ENCODE measurements at regions of chr7 and their contacts with region 1.

Region 1: GRCh38 chr7:116258734-116259133 is 48.4 kb downstream of the TES start:
- DNase-seq: peak; percentile 76
- H3K4me3 Mint-ChIP-seq: no peak overlapping the region
- H3K27ac Mint-ChIP-seq: no peak overlapping the region
- H3K4me1 Mint-ChIP-seq: peaks cover 3% of the 10 kb centered on the region
- H3K27me3 Mint-ChIP-seq: peaks cover 1% of the 10 kb centered on the region

Region 2: GRCh38 chr7:115356139-115356746 is 902.5 kb before region 1 on chr7:
- intact Hi-C with region 1: no loop called
- DNase-seq: no peak
- H3K4me3 Mint-ChIP-seq: no peak overlapping the region
- H3K27ac Mint-ChIP-seq: no peak overlapping the region
- H3K4me1 Mint-ChIP-seq: no peaks in the 10 kb centered on the region
- H3K27me3 Mint-ChIP-seq: no peaks in the 10 kb centered on the region

Region 3: DNA sequence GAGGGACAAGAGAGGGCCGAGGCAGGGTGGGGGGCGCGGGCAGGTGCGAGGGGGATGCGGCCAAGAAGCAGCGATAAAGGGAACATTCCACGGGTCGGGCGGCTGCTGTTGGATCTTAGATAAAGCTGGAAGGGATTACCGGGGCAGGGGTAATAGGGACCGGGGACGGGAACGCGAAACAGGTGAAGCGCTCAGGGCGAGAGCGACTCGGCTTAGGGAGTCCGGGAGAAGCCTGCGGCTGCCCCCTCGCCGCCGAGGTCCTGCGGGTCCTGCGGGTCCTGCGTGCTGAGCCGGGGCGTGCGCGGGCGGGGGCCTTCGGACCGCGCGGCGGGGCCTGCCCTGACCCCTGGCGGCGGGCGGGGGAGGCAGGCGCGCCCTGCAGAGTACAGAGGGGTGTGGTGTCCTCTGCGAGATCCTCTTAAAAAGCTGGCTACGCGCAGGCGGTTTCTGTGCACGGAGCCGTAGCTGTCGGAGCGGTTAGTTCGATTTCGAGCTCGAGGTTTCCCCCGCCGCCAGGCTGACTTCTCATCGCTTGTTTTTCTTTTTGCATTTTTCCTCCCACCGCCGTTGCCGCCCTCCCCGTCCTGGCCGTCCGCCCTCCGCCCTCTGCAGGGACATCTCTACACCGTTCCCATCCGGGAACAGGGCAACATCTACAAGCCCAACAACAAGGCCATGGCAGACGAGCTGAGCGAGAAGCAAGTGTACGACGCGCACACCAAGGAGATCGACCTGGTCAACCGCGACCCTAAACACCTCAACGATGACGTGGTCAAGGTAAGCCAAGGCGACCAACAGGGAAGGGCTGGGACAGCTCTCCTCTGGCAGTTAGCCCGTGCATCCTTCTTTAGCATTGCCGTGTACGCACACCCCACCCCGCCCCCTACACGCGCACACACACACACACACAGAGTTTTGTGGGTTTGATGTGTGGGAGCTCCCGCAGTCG is 267.5 kb after region 1 on chr7:
- intact Hi-C with region 1: loop called (anchors 2 kb)
- DNase-seq: peak; percentile 89
- H3K4me3 Mint-ChIP-seq: peak overlapping the region; percentile 88
- H3K27ac Mint-ChIP-seq: peak overlapping the region; percentile 67
- H3K4me1 Mint-ChIP-seq: peaks cover 27% of the 10 kb centered on the region
- H3K27me3 Mint-ChIP-seq: peaks cover 81% of the 10 kb centered on the region

Region 4: GRCh38 chr7:116809636-116810266 is 551.0 kb after region 1 on chr7:
- intact Hi-C with region 1: loop called (anchors 1 kb)
- DNase-seq: peak; percentile 71
- H3K4me3 Mint-ChIP-seq: no peak overlapping the region
- H3K27ac Mint-ChIP-seq: no peak overlapping the region
- H3K4me1 Mint-ChIP-seq: no peaks in the 10 kb centered on the region
- H3K27me3 Mint-ChIP-seq: peaks cover 11% of the 10 kb centered on the region